ENCODE measurements at regions of chr3 and their contacts with region 1.

Region 1: GRCh38 chr3:13452490-13453335 is 27.4 kb upstream of the HDAC11 start:
- DNase-seq: peak in 1 of 2 donors; percentile 79
- ATAC-seq: peak; percentile 25 to 40 (median 28)
- H3K4me3 ChIP-seq: no peak overlapping the region
- H3K4me3 Mint-ChIP-seq: peak overlapping the region; percentile 91
- H3K27ac ChIP-seq: no peak overlapping the region
- H3K27ac Mint-ChIP-seq: peak overlapping the region; percentile 87 to 89
- H3K4me1 ChIP-seq: peaks cover 16% of the 10 kb centered on the region
- H3K4me1 Mint-ChIP-seq: peaks cover 6 to 12% of the 10 kb centered on the region in 2 donors
- H3K27me3 ChIP-seq: no peaks in the 10 kb centered on the region
- H3K27me3 Mint-ChIP-seq: no peaks in the 10 kb centered on the region
- CTCF ChIP-seq: peak; percentile 73

Region 2: DNA sequence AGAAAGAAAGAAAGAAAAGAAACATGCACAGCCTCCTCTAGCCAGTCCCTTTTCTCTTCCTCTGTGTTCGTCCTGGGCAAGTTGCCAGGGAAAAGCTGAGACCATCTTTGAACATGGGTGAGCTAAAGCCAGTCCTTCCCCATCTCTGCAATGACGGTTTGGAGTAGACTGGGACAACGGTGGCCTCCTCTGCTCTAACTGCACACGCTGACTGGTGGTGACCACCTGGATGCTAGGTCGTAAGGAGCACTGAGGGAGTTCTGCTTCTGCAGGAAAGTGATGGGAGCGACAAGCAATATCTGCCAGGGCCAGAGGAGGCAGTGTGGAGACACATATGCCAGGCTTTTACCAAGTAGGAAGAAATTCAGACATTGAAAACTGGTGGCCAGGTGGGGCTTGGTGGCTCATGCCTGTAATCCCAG is 144.3 kb before region 1 on chr3:
- intact Hi-C with region 1: loop called (anchors 2 kb)
- DNase-seq: peak in 1 of 2 donors; percentile 60
- ATAC-seq: peak in 2 of 3 donors; percentile 47 to 53
- H3K4me3 ChIP-seq: no peak overlapping the region
- H3K4me3 Mint-ChIP-seq: no peak overlapping the region
- H3K27ac ChIP-seq: no peak overlapping the region
- H3K27ac Mint-ChIP-seq: peak overlapping the region; percentile 31 to 46
- H3K4me1 ChIP-seq: no peaks in the 10 kb centered on the region
- H3K4me1 Mint-ChIP-seq: peaks cover 0 to 5% of the 10 kb centered on the region in 2 donors
- H3K27me3 ChIP-seq: no peaks in the 10 kb centered on the region
- H3K27me3 Mint-ChIP-seq: no peaks in the 10 kb centered on the region
- CTCF ChIP-seq: peak; percentile 58

Region 3: GRCh38 chr3:13391308-13391707 is 61.4 kb before region 1 on chr3:
- intact Hi-C with region 1: loop called (anchors 2 kb)
- DNase-seq: peak in 1 of 2 donors; percentile 64
- ATAC-seq: peak in 1 of 3 donors; percentile 34
- H3K4me3 ChIP-seq: no peak overlapping the region
- H3K4me3 Mint-ChIP-seq: no peak overlapping the region
- H3K27ac ChIP-seq: no peak overlapping the region
- H3K27ac Mint-ChIP-seq: peak overlapping the region in 1 of 2 donors; percentile 60
- H3K4me1 ChIP-seq: no peaks in the 10 kb centered on the region
- H3K4me1 Mint-ChIP-seq: peaks cover 12 to 29% of the 10 kb centered on the region in 2 donors
- H3K27me3 ChIP-seq: no peaks in the 10 kb centered on the region
- H3K27me3 Mint-ChIP-seq: no peaks in the 10 kb centered on the region
- CTCF ChIP-seq: peak; percentile 42

Region 4: GRCh38 chr3:13419505-13420044 is 33.1 kb before region 1 on chr3:
- intact Hi-C with region 1: loop called (anchors 1 kb)
- DNase-seq: peak in 1 of 2 donors; percentile 83
- ATAC-seq: peak; percentile 46 to 72 (median 64)
- H3K4me3 ChIP-seq: peak overlapping the region; percentile 68
- H3K4me3 Mint-ChIP-seq: peak overlapping the region; percentile 89
- H3K27ac ChIP-seq: peak overlapping the region; percentile 85
- H3K27ac Mint-ChIP-seq: peak overlapping the region; percentile 94 to 95
- H3K4me1 ChIP-seq: peaks cover 56% of the 10 kb centered on the region
- H3K4me1 Mint-ChIP-seq: peaks cover 47 to 51% of the 10 kb centered on the region in 2 donors
- H3K27me3 ChIP-seq: no peaks in the 10 kb centered on the region
- H3K27me3 Mint-ChIP-seq: no peaks in the 10 kb centered on the region
- CTCF ChIP-seq: peak; percentile 11

Region 5: DNA sequence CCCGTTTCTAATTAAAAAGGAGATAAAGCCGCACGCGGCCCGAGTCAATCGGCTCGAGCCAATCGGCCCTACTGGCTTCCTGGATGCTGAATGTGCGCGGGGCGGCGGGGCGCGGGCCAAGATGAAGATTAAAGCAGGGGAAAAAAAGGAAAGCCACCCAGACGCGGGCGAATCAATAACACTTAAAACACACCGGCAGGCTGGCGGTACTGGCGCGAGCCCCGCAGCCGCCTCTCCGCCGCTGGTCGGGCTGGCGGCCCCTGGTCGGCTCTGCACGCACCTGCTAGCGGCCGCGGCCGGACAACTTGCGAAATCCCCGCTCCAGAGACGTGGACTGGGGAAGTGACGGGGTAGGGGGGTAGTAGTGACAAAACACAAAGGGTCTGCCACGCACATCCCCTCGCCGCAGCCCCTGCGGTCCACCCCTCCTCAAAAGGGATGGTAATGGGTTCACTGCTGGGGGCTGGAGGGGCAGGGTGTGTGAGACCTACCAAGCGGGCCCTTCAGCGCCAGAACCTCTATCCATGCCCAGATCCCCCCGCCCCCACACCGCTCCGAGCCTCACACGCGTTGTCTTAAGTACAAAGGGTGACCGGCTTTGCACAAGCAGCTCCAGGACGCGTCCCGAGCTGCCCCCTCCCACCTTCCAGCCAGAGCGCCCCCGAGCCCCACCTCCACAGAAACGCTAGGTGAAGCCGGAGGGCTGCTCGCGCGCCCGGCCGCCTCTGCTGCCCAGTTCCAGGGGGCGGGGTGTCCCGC is 425.7 kb after region 1 on chr3:
- intact Hi-C with region 1: no loop called
- DNase-seq: peak in 1 of 2 donors; percentile 43
- ATAC-seq: no peak
- H3K4me3 ChIP-seq: no peak overlapping the region
- H3K4me3 Mint-ChIP-seq: peak overlapping the region; percentile 75
- H3K27ac ChIP-seq: no peak overlapping the region
- H3K27ac Mint-ChIP-seq: no peak overlapping the region
- H3K4me1 ChIP-seq: peaks cover 24% of the 10 kb centered on the region
- H3K4me1 Mint-ChIP-seq: peaks cover 0 to 11% of the 10 kb centered on the region in 2 donors
- H3K27me3 ChIP-seq: peaks cover 42% of the 10 kb centered on the region
- H3K27me3 Mint-ChIP-seq: peaks cover 57 to 67% of the 10 kb centered on the region in 2 donors
- CTCF ChIP-seq: no peak